ENCODE measurements at regions of chr17 and their contacts with region 1.

Region 1: DNA sequence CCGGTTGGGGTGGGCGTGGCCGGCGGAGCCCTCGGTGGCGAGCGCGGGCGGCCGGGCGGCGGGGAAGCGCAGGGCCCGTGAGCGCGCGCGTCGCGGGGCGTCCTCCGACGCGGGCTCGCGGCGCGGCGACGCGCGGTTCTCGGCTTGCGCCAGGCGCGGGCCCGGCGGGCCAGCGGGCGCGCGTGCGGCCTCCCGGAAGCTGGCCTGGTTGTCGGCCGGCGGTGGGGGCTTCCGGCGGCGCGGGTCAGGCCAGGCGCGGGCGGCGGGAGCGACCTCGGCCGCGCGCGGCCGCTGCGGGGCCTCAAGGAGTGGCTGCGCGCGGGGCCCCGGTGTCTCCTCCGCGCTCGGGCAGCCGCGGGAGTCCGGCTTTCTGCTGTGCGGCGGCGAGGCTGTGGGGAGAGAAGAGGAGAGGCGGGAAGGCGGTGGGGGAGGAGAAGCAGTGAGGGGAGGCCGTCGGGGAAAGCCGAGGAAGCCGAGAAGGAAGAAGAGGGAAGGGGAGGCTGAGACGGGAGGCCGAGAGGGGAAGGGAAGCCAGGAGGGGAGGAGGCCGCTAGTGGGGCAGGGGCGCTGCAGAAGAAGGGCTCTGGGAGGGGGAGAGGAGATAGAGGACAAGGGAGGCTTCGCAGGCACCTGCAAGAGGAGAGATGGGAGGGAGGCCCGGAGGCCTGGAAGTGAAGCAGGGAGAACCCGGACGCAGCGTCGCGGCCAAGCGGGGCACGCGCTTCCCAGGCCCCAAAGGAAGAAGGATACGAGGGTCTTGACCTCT is 2.5 kb downstream of the C17orf58 start:
- DNase-seq: peak; percentile 82
- H3K4me3 Mint-ChIP-seq: peak overlapping the region; percentile 76
- H3K27ac Mint-ChIP-seq: peak overlapping the region; percentile 79
- H3K4me1 Mint-ChIP-seq: peaks cover 30% of the 10 kb centered on the region
- H3K27me3 Mint-ChIP-seq: no peaks in the 10 kb centered on the region

Region 2: DNA sequence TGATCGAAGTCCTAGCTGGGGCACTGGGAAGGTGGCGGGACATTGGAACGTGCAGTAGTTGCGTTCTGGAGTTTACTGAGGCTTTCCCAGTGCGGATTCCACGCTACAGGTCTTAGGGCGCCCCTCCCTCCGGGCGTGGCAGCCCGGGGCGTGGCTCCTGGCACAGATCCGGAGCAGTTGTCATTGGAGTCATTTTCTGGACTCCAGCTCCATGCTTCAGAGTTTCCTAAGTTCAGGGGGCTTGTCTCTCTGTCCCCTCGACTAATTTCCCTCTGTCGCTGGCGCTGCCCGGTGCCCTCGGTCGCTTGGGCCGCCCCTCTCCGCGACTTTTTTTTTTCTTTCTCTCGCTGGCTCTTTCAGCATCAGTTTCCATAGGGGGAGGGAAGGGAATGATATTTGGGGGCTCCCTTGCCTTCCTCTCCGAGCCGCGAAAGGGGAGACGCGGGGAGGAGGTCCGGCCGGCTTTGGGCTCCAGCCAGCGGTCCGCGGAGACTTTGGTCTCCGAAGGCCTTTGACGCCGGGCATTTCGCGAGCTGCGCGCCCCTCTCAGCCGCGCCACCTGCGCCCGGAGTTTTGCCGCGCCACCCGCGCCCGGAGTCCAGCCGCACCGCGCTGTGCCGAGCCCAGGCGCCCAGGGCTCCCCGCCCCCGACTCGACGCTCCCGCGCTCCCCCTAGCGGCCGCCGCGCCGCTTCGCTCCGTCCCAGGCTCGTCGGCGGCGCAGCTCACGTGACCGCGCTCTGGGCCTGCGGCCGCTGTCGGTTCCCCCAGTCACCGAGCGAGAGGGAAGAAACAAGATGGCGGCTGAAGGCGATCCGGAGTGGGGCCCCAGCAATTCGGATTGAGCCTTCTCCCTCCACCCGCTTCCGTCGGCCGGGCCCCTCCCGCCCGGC is 168.8 kb before region 1 on chr17 and contains the start of gene BPTF:
- CTCF ChIA-PET with region 1: no interaction called
- POLR2A ChIA-PET with region 1: no interaction called
- intact Hi-C with region 1: loop called (anchors 5 kb)
- DNase-seq: peak; percentile 94
- H3K4me3 Mint-ChIP-seq: peak within 1 kb of the TSS; percentile 95
- H3K27ac Mint-ChIP-seq: peak within 1 kb of the TSS; percentile 97
- H3K4me1 Mint-ChIP-seq: peaks cover 28% of the 10 kb centered on the region
- H3K27me3 Mint-ChIP-seq: peaks cover 2% of the 10 kb centered on the region
- total RNA-seq, gene BPTF: 67.6 to 71.4 TPM

Region 3: GRCh38 chr17:68011199-68011665 is 17.5 kb after region 1 on chr17:
- CTCF ChIA-PET with region 1: interaction called, 14 read pairs
- POLR2A ChIA-PET with region 1: interaction called, 3 read pairs
- intact Hi-C with region 1: loop called (anchors 1 kb)
- DNase-seq: peak; percentile 80
- H3K4me3 Mint-ChIP-seq: peak overlapping the region; percentile 58
- H3K27ac Mint-ChIP-seq: no peak overlapping the region
- H3K4me1 Mint-ChIP-seq: peaks cover 5% of the 10 kb centered on the region
- H3K27me3 Mint-ChIP-seq: peaks cover 2% of the 10 kb centered on the region

Region 4: GRCh38 chr17:68035523-68036303 is 41.9 kb after region 1 on chr17 and contains the start of gene KPNA2:
- CTCF ChIA-PET with region 1: interaction called, 3 read pairs
- POLR2A ChIA-PET with region 1: interaction called, 13 read pairs
- intact Hi-C with region 1: loop called (anchors 2 kb)
- DNase-seq: peak; percentile 95
- H3K4me3 Mint-ChIP-seq: peak within 1 kb of the TSS; percentile 95
- H3K27ac Mint-ChIP-seq: peak within 1 kb of the TSS; percentile 95
- H3K4me1 Mint-ChIP-seq: peaks cover 21% of the 10 kb centered on the region
- H3K27me3 Mint-ChIP-seq: no peaks in the 10 kb centered on the region
- total RNA-seq, gene KPNA2: 225 to 229 TPM

Region 5: DNA sequence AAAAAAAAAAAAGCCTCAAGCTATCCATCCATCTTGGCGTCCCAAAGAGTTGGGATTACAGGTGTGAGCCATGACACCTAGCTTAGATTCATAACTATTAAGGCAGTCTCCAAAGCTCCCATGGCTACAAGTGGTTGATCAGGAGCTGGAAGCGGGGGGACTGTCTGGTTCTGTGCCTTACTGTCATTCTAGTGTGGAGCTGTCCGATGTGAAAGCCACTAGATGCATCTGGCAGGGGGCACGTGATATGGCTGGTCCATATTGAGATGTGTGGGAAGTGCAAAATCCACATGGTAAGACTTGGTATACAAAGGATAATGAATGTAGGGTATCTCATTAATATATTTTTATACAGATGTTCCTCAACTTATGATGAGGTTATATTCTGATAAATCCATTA is 80.5 kb after region 1 on chr17:
- CTCF ChIA-PET with region 1: no interaction called
- POLR2A ChIA-PET with region 1: no interaction called
- intact Hi-C with region 1: no loop called
- DNase-seq: no peak
- H3K4me3 Mint-ChIP-seq: no peak overlapping the region
- H3K27ac Mint-ChIP-seq: no peak overlapping the region
- H3K4me1 Mint-ChIP-seq: no peaks in the 10 kb centered on the region
- H3K27me3 Mint-ChIP-seq: no peaks in the 10 kb centered on the region

Region 6: DNA sequence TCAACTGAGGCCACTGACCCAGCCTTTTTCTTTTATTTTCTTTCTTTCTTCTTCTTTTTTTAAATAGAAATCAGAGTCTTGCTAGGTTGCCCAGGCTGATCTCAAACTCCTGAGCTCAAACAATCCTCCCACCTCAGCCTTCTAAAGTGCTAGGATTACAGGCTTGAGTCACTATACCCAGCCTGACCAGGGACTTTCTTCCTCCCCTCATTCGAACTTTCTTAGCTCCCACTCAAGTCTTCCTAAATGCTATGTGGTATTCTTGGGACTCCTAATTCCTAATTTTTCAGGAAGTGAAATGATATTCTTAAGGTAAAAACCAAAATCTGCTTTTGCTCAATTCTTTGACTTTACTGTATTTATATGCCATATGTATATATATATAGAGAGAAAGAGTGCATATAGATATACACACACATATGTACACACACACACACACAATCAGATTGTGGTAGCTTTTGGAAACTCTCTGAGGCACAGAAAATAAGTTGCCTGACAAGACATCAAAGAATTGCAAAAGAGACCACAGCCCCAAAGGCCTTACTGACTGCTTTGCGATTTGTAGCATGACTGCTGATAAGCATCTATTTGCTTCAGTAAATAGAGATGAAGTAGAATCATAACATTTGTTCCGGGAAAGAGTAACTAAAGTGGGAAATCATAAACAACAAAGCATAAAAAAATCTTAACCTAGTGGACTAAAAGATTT is 244.5 kb after region 1 on chr17:
- CTCF ChIA-PET with region 1: interaction called, 3 read pairs
- POLR2A ChIA-PET with region 1: no interaction called
- intact Hi-C with region 1: loop called (anchors 2 kb)
- DNase-seq: peak; percentile 38
- H3K4me3 Mint-ChIP-seq: peak overlapping the region; percentile 73
- H3K27ac Mint-ChIP-seq: peak overlapping the region; percentile 96
- H3K4me1 Mint-ChIP-seq: peaks cover 53% of the 10 kb centered on the region
- H3K27me3 Mint-ChIP-seq: no peaks in the 10 kb centered on the region